GM12878 (cell line): ENCODE measurements at regions of chr17 and their contacts with region 1.

Region 1: DNA sequence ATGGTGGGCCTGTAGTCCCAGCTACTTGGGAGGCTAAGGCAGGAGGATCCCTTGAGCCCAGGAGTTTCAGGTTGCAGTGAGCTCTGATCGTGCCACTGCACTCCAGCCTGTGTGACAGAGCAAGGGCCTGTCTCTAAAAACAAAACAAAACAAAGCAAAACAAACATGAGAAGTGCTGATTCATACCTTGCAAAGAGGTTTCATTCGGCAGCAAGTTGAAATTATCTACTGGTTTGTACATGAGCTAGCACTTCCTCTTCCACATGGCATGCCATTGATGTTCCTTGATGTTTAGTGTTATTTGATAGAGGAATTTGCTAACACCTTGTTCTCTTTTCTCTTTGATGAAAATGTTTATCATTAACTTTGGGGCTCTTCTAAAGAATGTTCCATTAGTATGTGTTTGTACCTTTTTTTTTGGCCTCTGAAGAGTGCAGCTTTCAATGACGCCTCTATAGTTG is 50.6 kb downstream of the SPECC1 start:
- DNase-seq: peak; percentile 64
- ATAC-seq: peak; percentile 62
- H3K4me3 ChIP-seq: no peak overlapping the region
- H3K27ac ChIP-seq: peak overlapping the region; percentile 68
- H3K4me1 ChIP-seq: peaks cover 28% of the 10 kb centered on the region
- H3K27me3 ChIP-seq: no peaks in the 10 kb centered on the region
- CTCF ChIP-seq: no peak
- EP300 ChIP-seq: no peak; a peak in 1 of 4 replicates
- POLR2A ChIP-seq: no peak
- RAD21 ChIP-seq: no peak

Region 2: GRCh38 chr17:20022701-20023100 is 37.1 kb before region 1 on chr17:
- CTCF ChIA-PET with region 1: no interaction called
- POLR2A ChIA-PET with region 1: no interaction called
- RAD21 ChIA-PET with region 1: no interaction called
- SMC1A ChIA-PET with region 1: no interaction called
- in situ Hi-C with region 1: no loop called
- intact Hi-C with region 1: no loop called
- DNase-seq: no peak
- ATAC-seq: no peak
- H3K4me3 ChIP-seq: no peak overlapping the region
- H3K27ac ChIP-seq: no peak overlapping the region
- H3K4me1 ChIP-seq: no peaks in the 10 kb centered on the region
- H3K27me3 ChIP-seq: no peaks in the 10 kb centered on the region
- CTCF ChIP-seq: no peak
- EP300 ChIP-seq: no peak
- POLR2A ChIP-seq: no peak
- RAD21 ChIP-seq: no peak

Region 3: GRCh38 chr17:20095336-20096080 is 35.8 kb after region 1 on chr17:
- CTCF ChIA-PET with region 1: no interaction called
- POLR2A ChIA-PET with region 1: no interaction called
- RAD21 ChIA-PET with region 1: no interaction called
- SMC1A ChIA-PET with region 1: no interaction called
- in situ Hi-C with region 1: no loop called
- intact Hi-C with region 1: loop called (anchors 5 kb)
- DNase-seq: no peak
- ATAC-seq: no peak
- H3K4me3 ChIP-seq: no peak overlapping the region
- H3K27ac ChIP-seq: no peak overlapping the region
- H3K4me1 ChIP-seq: no peaks in the 10 kb centered on the region
- H3K27me3 ChIP-seq: no peaks in the 10 kb centered on the region
- CTCF ChIP-seq: no peak
- EP300 ChIP-seq: no peak
- POLR2A ChIP-seq: no peak
- RAD21 ChIP-seq: no peak

Region 4: DNA sequence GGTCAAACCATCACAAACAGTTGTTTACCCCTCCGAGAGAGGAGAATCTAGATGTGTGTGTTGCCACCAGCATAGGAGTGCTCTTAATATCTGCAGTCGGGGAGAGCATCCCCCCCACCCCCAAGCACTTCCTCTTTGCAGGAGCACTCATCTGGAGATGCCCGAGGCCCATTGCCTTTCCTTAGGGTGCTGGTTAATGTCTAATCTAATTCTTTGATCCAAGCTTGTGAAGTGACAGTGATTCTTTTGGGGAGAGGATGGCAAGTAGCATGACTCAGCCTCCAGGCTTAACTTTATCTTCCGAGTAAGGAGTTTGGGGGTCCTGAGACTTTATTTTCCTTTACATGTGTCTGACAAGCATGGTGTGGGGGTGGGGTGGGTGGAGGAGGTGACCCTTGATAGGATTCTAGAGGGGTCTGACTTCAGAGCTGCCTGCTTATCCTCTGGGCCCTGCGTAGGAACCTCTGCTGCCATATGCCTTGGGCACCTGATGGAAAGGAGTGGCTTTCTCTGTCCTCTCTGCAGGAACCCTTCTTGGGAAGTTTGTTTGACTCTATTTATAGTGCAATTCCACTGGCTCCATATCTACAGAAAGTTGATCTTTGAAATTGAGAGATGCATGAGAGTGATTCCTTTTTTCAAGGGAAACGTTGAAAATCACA is 156.5 kb after region 1 on chr17:
- CTCF ChIA-PET with region 1: no interaction called
- POLR2A ChIA-PET with region 1: no interaction called
- RAD21 ChIA-PET with region 1: no interaction called
- SMC1A ChIA-PET with region 1: no interaction called
- in situ Hi-C with region 1: no loop called
- intact Hi-C with region 1: no loop called
- DNase-seq: no peak
- ATAC-seq: no peak
- H3K4me3 ChIP-seq: no peak overlapping the region
- H3K27ac ChIP-seq: no peak overlapping the region
- H3K4me1 ChIP-seq: peaks cover 3% of the 10 kb centered on the region; the same call in 1 of the 2 replicates
- H3K27me3 ChIP-seq: no peaks in the 10 kb centered on the region
- CTCF ChIP-seq: no peak
- EP300 ChIP-seq: no peak
- POLR2A ChIP-seq: no peak
- RAD21 ChIP-seq: no peak